Activated CD4-positive, alpha-beta T cell treated with anti-CD3 and anti-CD28 coated beads for 36 hours (primary cell): ENCODE measurements at regions of chr11 and their contacts with region 1.

Region 1: GRCh38 chr11:62726915-62727763 is at the start of gene HNRNPUL2:
- DNase-seq: peak; percentile 99
- ATAC-seq: peak; percentile 89
- H3K4me3 Mint-ChIP-seq: peak within 1 kb of the TSS; percentile 87
- H3K27ac Mint-ChIP-seq: peak within 1 kb of the TSS; percentile 97
- H3K4me1 Mint-ChIP-seq: peaks cover 41% of the 10 kb centered on the region
- H3K27me3 Mint-ChIP-seq: no peaks in the 10 kb centered on the region
- total RNA-seq, gene HNRNPUL2: 48.7 to 59.6 TPM

Region 2: GRCh38 chr11:62601394-62602140 is 125.6 kb before region 1 on chr11 and contains the start of gene MTA2:
- CTCF ChIA-PET with region 1: interaction called, 4 read pairs
- POLR2A ChIA-PET with region 1: interaction called, 6 read pairs
- intact Hi-C with region 1: loop called in 1 of 2 experiments (anchors 1 kb)
- DNase-seq: peak; percentile 100
- ATAC-seq: peak; percentile 89
- H3K4me3 Mint-ChIP-seq: peak within 1 kb of the TSS; percentile 91
- H3K27ac Mint-ChIP-seq: peak within 1 kb of the TSS; percentile 96
- H3K4me1 Mint-ChIP-seq: peaks cover 51% of the 10 kb centered on the region
- H3K27me3 Mint-ChIP-seq: no peaks in the 10 kb centered on the region
- total RNA-seq, gene MTA2: 159 to 179 TPM

Region 3: GRCh38 chr11:62665075-62665598 is 62.0 kb before region 1 on chr11 and contains the starts of genes C11orf98 and CSKMT:
- CTCF ChIA-PET with region 1: no interaction called
- POLR2A ChIA-PET with region 1: interaction called, 32 read pairs
- intact Hi-C with region 1: loop called (anchors 1 to 5 kb)
- DNase-seq: peak; percentile 97
- ATAC-seq: peak; percentile 90
- H3K4me3 Mint-ChIP-seq: peak within 1 kb of the TSS; percentile 93
- H3K27ac Mint-ChIP-seq: peak within 1 kb of the TSS; percentile 89
- H3K4me1 Mint-ChIP-seq: peaks cover 38% of the 10 kb centered on the region
- H3K27me3 Mint-ChIP-seq: no peaks in the 10 kb centered on the region
- total RNA-seq, gene C11orf98: 108 to 135 TPM
- total RNA-seq, gene CSKMT: 12.6 to 31.3 TPM

Region 4: GRCh38 chr11:62771144-62772021 is 44.2 kb after region 1 on chr11 and contains the start of gene TAF6L:
- CTCF ChIA-PET with region 1: no interaction called
- POLR2A ChIA-PET with region 1: interaction called, 5 read pairs
- intact Hi-C with region 1: loop called in 1 of 2 experiments (anchors 1 kb)
- DNase-seq: peak; percentile 98
- ATAC-seq: peak; percentile 87
- H3K4me3 Mint-ChIP-seq: peak within 1 kb of the TSS; percentile 85
- H3K27ac Mint-ChIP-seq: peak within 1 kb of the TSS; percentile 89
- H3K4me1 Mint-ChIP-seq: peaks cover 26% of the 10 kb centered on the region
- H3K27me3 Mint-ChIP-seq: no peaks in the 10 kb centered on the region
- total RNA-seq, gene TAF6L: 10.2 to 12.6 TPM

Region 5: GRCh38 chr11:62841361-62842184 is 114.4 kb after region 1 on chr11:
- CTCF ChIA-PET with region 1: interaction called, 5 read pairs
- POLR2A ChIA-PET with region 1: interaction called, 69 read pairs
- intact Hi-C with region 1: loop called (anchors 1 to 2 kb)
- DNase-seq: peak; percentile 86
- ATAC-seq: peak; percentile 67
- H3K4me3 Mint-ChIP-seq: no peak overlapping the region
- H3K27ac Mint-ChIP-seq: no peak overlapping the region
- H3K4me1 Mint-ChIP-seq: peaks cover 24% of the 10 kb centered on the region
- H3K27me3 Mint-ChIP-seq: no peaks in the 10 kb centered on the region

Region 6: GRCh38 chr11:63042596-63042995 is 315.5 kb after region 1 on chr11:
- CTCF ChIA-PET with region 1: no interaction called
- POLR2A ChIA-PET with region 1: no interaction called
- intact Hi-C with region 1: no loop called
- DNase-seq: no peak
- ATAC-seq: no peak
- H3K4me3 Mint-ChIP-seq: no peak overlapping the region
- H3K27ac Mint-ChIP-seq: no peak overlapping the region
- H3K4me1 Mint-ChIP-seq: no peaks in the 10 kb centered on the region
- H3K27me3 Mint-ChIP-seq: peaks cover 19% of the 10 kb centered on the region

Region 7: DNA sequence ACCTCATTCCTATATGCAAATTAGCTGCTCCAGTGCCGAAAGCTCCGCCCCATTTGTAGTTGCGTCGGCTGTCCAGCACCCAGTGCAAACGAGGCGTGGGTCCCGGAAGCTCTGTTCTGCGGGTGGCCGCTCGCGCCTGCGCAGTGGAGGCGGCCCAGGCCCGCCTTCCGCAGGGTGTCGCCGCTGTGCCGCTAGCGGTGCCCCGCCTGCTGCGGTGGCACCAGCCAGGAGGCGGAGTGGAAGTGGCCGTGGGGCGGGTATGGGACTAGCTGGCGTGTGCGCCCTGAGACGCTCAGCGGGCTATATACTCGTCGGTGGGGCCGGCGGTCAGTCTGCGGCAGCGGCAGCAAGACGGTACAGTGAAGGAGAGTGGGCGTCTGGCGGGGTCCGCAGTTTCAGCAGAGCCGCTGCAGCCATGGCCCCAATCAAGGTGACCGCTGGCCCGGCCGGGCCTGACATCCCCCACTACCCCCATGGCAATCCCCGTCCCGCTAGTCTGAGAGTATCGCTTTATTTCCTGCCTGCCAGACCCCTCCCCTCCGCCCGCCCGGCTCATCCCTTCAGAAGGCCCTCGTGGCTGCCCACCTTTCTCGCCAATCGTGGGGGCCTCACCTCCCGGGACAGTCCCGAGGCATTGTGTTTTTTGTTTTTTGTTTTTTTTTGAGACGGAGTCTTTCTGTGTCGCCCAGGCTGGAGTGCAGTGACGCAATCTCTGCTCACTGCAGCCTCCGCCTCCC is 1591.0 kb after region 1 on chr11 and contains the start of gene PRDX5:
- CTCF ChIA-PET with region 1: no interaction called
- POLR2A ChIA-PET with region 1: no interaction called
- intact Hi-C with region 1: loop called in 1 of 2 experiments (anchors 5 kb)
- DNase-seq: peak; percentile 97
- ATAC-seq: peak; percentile 84
- H3K4me3 Mint-ChIP-seq: peak within 1 kb of the TSS; percentile 97
- H3K27ac Mint-ChIP-seq: peak within 1 kb of the TSS; percentile 99
- H3K4me1 Mint-ChIP-seq: peaks cover 26% of the 10 kb centered on the region
- H3K27me3 Mint-ChIP-seq: no peaks in the 10 kb centered on the region
- total RNA-seq, gene PRDX5: 110 to 142 TPM